CD4-positive, alpha-beta T cell (primary cell): ENCODE measurements at regions of chr10 and their contacts with region 1.

Region 1: DNA sequence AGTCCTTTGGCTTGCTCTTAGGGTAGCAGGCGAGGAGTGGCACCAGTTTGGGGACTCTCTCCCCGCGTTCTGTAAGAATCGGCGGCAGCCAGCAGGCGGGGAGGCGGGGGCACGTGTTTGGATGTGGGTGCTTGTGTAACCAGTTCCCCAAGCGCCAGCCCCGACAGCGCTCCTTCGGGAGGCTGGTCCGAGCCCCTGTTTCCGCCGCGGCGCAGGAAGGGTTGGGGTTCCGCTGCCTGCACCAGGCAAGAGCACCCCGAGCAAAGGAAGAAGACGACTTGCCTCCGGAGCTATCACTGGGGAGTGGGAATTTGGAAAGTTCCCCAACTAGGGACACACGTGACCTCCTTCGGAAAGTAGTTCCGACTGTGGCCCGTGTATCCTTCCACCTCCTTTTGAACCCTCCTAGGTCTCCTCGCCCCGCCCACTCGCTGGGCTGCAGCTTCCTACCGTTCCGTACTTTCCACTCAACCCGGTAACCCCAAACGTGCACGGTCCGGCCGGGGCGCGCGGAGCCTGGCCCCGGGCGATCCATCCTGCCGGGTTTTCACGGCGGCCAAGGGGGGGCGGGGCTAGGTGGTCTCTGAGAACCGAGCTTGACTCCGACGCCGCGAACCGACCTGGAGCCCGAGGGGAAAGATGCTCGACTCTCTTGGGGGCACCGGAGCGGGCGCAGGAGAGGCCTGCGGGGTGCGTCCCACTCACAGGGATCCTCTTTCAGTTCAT is 1.2 kb downstream of the KLLN start:
- DNase-seq: peak; percentile 89 to 98 (median 92)
- ATAC-seq: peak; percentile 72
- H3K4me3 ChIP-seq: peak overlapping the region; percentile 94
- H3K4me3 Mint-ChIP-seq: peak overlapping the region; percentile 96
- H3K27ac ChIP-seq: peak overlapping the region; percentile 81 to 84
- H3K27ac Mint-ChIP-seq: peak overlapping the region; percentile 92
- H3K4me1 ChIP-seq: peaks cover 22% of the 10 kb centered on the region
- H3K4me1 Mint-ChIP-seq: peaks cover 43% of the 10 kb centered on the region
- H3K27me3 ChIP-seq: no peaks in the 10 kb centered on the region
- H3K27me3 Mint-ChIP-seq: no peaks in the 10 kb centered on the region
- CTCF ChIP-seq: no peak

Region 2: DNA sequence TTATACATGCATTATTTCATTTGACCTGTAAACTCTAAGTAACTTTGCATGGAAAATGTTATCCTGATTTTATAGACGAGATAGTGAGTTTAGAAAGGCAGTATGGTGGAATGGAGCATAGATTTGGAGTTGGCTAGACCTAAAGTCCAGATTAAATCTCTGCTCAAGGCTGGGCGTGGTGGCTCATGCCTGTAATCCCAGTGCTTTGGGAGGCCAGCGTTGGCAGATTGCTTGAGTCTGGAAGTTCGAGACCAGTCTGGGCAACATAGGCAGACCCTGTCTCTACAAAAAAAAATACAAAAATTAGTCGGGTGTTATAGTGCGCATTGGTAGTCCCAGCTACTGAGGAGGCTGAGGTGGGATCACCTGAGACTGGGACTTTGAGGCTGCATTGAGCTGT is 10.7 kb after region 1 on chr10:
- CTCF ChIA-PET with region 1: interaction called, 7 read pairs
- POLR2A ChIA-PET with region 1: interaction called, 30 read pairs
- intact Hi-C with region 1: loop called in 1 of 2 experiments (anchors 1 kb)
- DNase-seq: no peak
- ATAC-seq: no peak
- H3K4me3 ChIP-seq: no peak overlapping the region
- H3K4me3 Mint-ChIP-seq: peak overlapping the region; percentile 4
- H3K27ac ChIP-seq: no peak overlapping the region
- H3K27ac Mint-ChIP-seq: no peak overlapping the region
- H3K4me1 ChIP-seq: peaks cover 18% of the 10 kb centered on the region
- H3K4me1 Mint-ChIP-seq: peaks cover 77% of the 10 kb centered on the region
- H3K27me3 ChIP-seq: no peaks in the 10 kb centered on the region
- H3K27me3 Mint-ChIP-seq: no peaks in the 10 kb centered on the region
- CTCF ChIP-seq: no peak

Region 3: GRCh38 chr10:87925570-87925969 is 63.5 kb after region 1 on chr10:
- CTCF ChIA-PET with region 1: interaction called, 4 read pairs
- POLR2A ChIA-PET with region 1: interaction called, 21 read pairs
- intact Hi-C with region 1: no loop called
- DNase-seq: no peak
- ATAC-seq: no peak
- H3K4me3 ChIP-seq: no peak overlapping the region
- H3K4me3 Mint-ChIP-seq: peak overlapping the region; percentile 26
- H3K27ac ChIP-seq: no peak overlapping the region
- H3K27ac Mint-ChIP-seq: no peak overlapping the region
- H3K4me1 ChIP-seq: peaks cover 12% of the 10 kb centered on the region
- H3K4me1 Mint-ChIP-seq: peaks cover 93% of the 10 kb centered on the region
- H3K27me3 ChIP-seq: no peaks in the 10 kb centered on the region
- H3K27me3 Mint-ChIP-seq: no peaks in the 10 kb centered on the region
- CTCF ChIP-seq: no peak

Region 4: GRCh38 chr10:88048312-88048711 is 186.2 kb after region 1 on chr10:
- CTCF ChIA-PET with region 1: no interaction called
- POLR2A ChIA-PET with region 1: no interaction called
- intact Hi-C with region 1: no loop called
- DNase-seq: no peak
- ATAC-seq: no peak
- H3K4me3 ChIP-seq: no peak overlapping the region
- H3K4me3 Mint-ChIP-seq: no peak overlapping the region
- H3K27ac ChIP-seq: no peak overlapping the region
- H3K27ac Mint-ChIP-seq: no peak overlapping the region
- H3K4me1 ChIP-seq: peaks cover 5% of the 10 kb centered on the region
- H3K4me1 Mint-ChIP-seq: peaks cover 21% of the 10 kb centered on the region
- H3K27me3 ChIP-seq: no peaks in the 10 kb centered on the region
- H3K27me3 Mint-ChIP-seq: no peaks in the 10 kb centered on the region
- CTCF ChIP-seq: no peak

Region 5: DNA sequence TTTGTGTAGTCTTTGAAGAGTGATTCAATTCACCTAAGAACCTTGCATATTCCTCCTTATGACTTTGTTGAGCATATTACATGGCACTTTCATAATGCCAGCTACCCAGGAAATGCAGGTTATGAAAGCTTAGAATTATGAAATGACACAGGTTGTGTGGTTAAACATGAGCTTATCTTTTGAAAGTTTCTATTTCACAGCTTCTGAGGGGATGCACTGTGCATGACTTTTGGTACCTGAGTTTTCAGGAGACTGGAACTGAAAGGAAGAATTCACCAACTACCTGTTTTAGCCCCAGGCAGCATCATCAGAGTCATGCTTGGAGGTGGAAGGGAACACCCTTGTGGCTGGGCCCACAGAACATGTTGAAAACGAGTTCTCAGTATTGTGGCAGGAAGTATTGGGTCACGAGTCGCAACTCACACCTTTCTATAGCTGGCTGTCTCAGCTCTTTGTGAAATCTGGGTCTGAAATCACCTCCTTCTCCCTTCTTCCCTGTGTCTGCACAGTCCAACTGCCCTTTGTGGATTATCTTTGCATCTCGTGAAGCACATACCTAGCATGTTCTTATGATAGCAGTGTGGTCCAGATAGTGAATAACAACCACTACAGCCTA is 229.5 kb after region 1 on chr10:
- CTCF ChIA-PET with region 1: no interaction called
- POLR2A ChIA-PET with region 1: interaction called, 26 read pairs
- intact Hi-C with region 1: loop called in 1 of 2 experiments (anchors 2 kb)
- DNase-seq: peak; percentile 28 to 93 (median 52)
- ATAC-seq: peak; percentile 96
- H3K4me3 ChIP-seq: no peak overlapping the region
- H3K4me3 Mint-ChIP-seq: peak overlapping the region; percentile 28
- H3K27ac ChIP-seq: peak overlapping the region; percentile 17 to 72
- H3K27ac Mint-ChIP-seq: peak overlapping the region; percentile 73
- H3K4me1 ChIP-seq: peaks cover 32% of the 10 kb centered on the region
- H3K4me1 Mint-ChIP-seq: peaks cover 51% of the 10 kb centered on the region
- H3K27me3 ChIP-seq: no peaks in the 10 kb centered on the region
- H3K27me3 Mint-ChIP-seq: no peaks in the 10 kb centered on the region
- CTCF ChIP-seq: no peak

Region 6: GRCh38 chr10:88270871-88271713 is 409.0 kb after region 1 on chr10:
- CTCF ChIA-PET with region 1: no interaction called
- POLR2A ChIA-PET with region 1: interaction called, 8 read pairs
- intact Hi-C with region 1: loop called in 1 of 2 experiments (anchors 5 kb)
- DNase-seq: peak in 12 of 14 experiments; percentile 4 to 77 (median 16)
- ATAC-seq: peak; percentile 73
- H3K4me3 ChIP-seq: peak overlapping the region; percentile 1
- H3K4me3 Mint-ChIP-seq: peak overlapping the region; percentile 75
- H3K27ac ChIP-seq: peak overlapping the region; percentile 25 to 33
- H3K27ac Mint-ChIP-seq: peak overlapping the region; percentile 80
- H3K4me1 ChIP-seq: peaks cover 32% of the 10 kb centered on the region
- H3K4me1 Mint-ChIP-seq: peaks cover 48% of the 10 kb centered on the region
- H3K27me3 ChIP-seq: no peaks in the 10 kb centered on the region
- H3K27me3 Mint-ChIP-seq: no peaks in the 10 kb centered on the region
- CTCF ChIP-seq: no peak

Region 7: GRCh38 chr10:88553116-88553752 is 691.1 kb after region 1 on chr10:
- CTCF ChIA-PET with region 1: no interaction called
- POLR2A ChIA-PET with region 1: interaction called, 4 read pairs
- intact Hi-C with region 1: loop called in 1 of 2 experiments (anchors 1 kb)
- DNase-seq: peak in 13 of 14 experiments; percentile 2 to 76 (median 20)
- ATAC-seq: peak; percentile 97
- H3K4me3 ChIP-seq: no peak overlapping the region
- H3K4me3 Mint-ChIP-seq: no peak overlapping the region
- H3K27ac ChIP-seq: no peak overlapping the region
- H3K27ac Mint-ChIP-seq: no peak overlapping the region
- H3K4me1 ChIP-seq: no peaks in the 10 kb centered on the region
- H3K4me1 Mint-ChIP-seq: no peaks in the 10 kb centered on the region
- H3K27me3 ChIP-seq: no peaks in the 10 kb centered on the region
- H3K27me3 Mint-ChIP-seq: no peaks in the 10 kb centered on the region
- CTCF ChIP-seq: peak; percentile 78